ENCODE measurements at regions of chr11 and their contacts with region 1.

Region 1: GRCh38 chr11:101848262-101848661 is 66.5 kb upstream of the CEP126 start:
- DNase-seq: no peak
- H3K4me3 ChIP-seq: no peak overlapping the region
- H3K27ac ChIP-seq: no peak overlapping the region
- H3K4me1 ChIP-seq: no peaks in the 10 kb centered on the region
- H3K27me3 ChIP-seq: no peaks in the 10 kb centered on the region
- CTCF ChIP-seq: peak in 2 of 3 experiments; percentile 14 to 58
- POLR2A ChIP-seq: no peak

Region 2: DNA sequence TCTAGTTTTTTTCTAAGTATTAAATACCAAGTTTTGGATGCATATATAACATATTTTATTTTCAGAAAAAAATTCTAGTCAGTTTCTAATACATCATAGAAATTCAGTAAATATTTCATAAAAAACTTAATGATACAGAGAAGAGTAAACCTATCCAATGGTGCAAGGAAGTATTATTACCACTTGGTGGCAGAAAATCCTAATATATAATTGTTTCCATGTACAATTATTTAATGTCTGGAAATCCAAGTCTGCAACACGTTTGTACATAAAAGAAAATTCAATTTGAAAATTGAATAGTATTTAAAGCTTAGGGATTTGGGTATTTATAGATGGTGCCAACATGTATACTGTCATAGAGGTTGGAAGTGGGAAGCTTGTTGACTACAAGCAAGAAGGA is 391.4 kb before region 1 on chr11:
- intact Hi-C with region 1: loop called (anchors 10 kb)
- DNase-seq: no peak
- H3K4me3 ChIP-seq: no peak overlapping the region
- H3K27ac ChIP-seq: no peak overlapping the region
- H3K4me1 ChIP-seq: no peaks in the 10 kb centered on the region
- H3K27me3 ChIP-seq: no peaks in the 10 kb centered on the region
- CTCF ChIP-seq: peak in 2 of 3 experiments; percentile 4 to 43
- POLR2A ChIP-seq: no peak

Measured in testis (tissue), 5 donors.